ENCODE measurements at regions of chr6 and their contacts with region 1.

Region 1: GRCh38 chr6:29649701-29650673 is 6.9 kb upstream of the MOG start:
- DNase-seq: peak; percentile 95 to 97
- ATAC-seq: peak; percentile 99 to 100
- H3K4me3 ChIP-seq: peak overlapping the region; percentile 65 to 73 (median 69)
- H3K27ac ChIP-seq: peak overlapping the region; percentile 86 to 98 (median 91)
- H3K4me1 ChIP-seq: peaks cover 0 to 3% of the 10 kb centered on the region in 2 donors
- H3K27me3 ChIP-seq: no peaks in the 10 kb centered on the region
- CTCF ChIP-seq: peak; percentile 84 to 94 (median 89)
- POLR2A ChIP-seq: peak; percentile 70 to 95

Region 2: GRCh38 chr6:29524444-29525310 is 125.3 kb before region 1 on chr6:
- in situ Hi-C with region 1: no loop called
- intact Hi-C with region 1: no loop called
- DNase-seq: no peak
- ATAC-seq: no peak
- H3K4me3 ChIP-seq: no peak overlapping the region
- H3K27ac ChIP-seq: no peak overlapping the region
- H3K4me1 ChIP-seq: no peaks in the 10 kb centered on the region
- H3K27me3 ChIP-seq: no peaks in the 10 kb centered on the region
- CTCF ChIP-seq: no peak
- POLR2A ChIP-seq: no peak

Region 3: GRCh38 chr6:29884261-29884660 is 234.3 kb after region 1 on chr6:
- in situ Hi-C with region 1: no loop called
- intact Hi-C with region 1: no loop called
- DNase-seq: no peak
- ATAC-seq: no peak
- H3K4me3 ChIP-seq: no peak overlapping the region
- H3K27ac ChIP-seq: no peak overlapping the region
- H3K4me1 ChIP-seq: peaks cover 0 to 5% of the 10 kb centered on the region in 2 donors
- H3K27me3 ChIP-seq: peaks cover 0 to 12% (median 0%) of the 10 kb centered on the region in 3 donors
- CTCF ChIP-seq: no peak
- POLR2A ChIP-seq: no peak

Region 4: GRCh38 chr6:30061092-30061857 is 411.3 kb after region 1 on chr6 and contains the start of gene POLR1H:
- in situ Hi-C with region 1: no loop called
- intact Hi-C with region 1: loop called (anchors 2 kb)
- DNase-seq: peak; percentile 90 to 92
- ATAC-seq: peak; percentile 97 to 98
- H3K4me3 ChIP-seq: peak within 1 kb of the TSS; percentile 80 to 98 (median 88)
- H3K27ac ChIP-seq: peak within 1 kb of the TSS; percentile 92 to 97 (median 95)
- H3K4me1 ChIP-seq: peaks cover 27 to 29% of the 10 kb centered on the region in 2 donors
- H3K27me3 ChIP-seq: no peaks in the 10 kb centered on the region
- CTCF ChIP-seq: no peak
- POLR2A ChIP-seq: peak; percentile 87
- total RNA-seq, gene POLR1H: 23.8 to 41.6 (median 27.9) TPM

Measured in gastrocnemius medialis (tissue), 4 donors.